Posterior cingulate gyrus (tissue), 11 donors: ENCODE measurements at regions of chr16 and their contacts with region 1.

Region 1: GRCh38 chr16:4240624-4241023 is 1.3 kb downstream of the SRL start:
- DNase-seq: no peak

Region 2: DNA sequence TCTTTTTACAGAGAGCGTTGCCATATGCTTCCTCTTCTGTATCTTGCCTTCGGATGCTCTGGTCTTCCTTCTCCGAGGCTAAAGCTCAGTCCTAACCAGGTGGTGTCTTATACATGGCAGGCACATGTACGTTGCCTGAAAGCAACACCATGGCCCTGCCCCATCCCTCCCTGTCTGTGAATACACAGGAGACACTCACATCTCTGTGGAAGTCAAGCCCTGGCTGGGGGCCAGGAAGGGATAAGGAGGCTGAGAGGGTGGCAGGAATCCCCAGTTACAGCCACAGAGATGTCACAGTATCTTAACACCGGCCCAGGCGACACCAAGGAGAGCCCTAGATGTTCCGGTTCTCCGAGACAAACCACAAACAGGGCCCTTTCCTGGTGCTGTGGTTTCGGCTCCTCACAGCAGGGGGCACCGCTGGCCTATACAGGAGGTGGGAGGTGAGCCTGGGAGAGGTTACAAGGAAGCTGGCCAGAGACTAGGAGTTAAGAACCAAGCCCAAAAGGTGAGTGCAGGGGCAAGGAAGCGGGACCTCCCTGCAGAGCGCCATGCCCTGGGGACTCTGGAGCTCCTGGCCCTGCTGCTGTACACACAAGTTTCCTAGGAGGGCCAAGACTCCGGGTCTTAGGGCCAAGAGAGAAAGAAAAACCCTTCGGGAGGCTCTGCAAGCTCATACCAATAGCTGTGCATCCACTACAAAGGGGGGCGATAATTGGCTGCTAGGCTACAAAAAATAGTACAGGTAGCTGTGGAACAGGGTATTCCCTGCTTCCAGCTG is 40.4 kb before region 1 on chr16:
- intact Hi-C with region 1: loop called (anchors 1 kb)
- DNase-seq: peak in 8 of 10 donors; percentile 18 to 91 (median 48)

Region 3: GRCh38 chr16:4307215-4308037 is 66.8 kb after region 1 on chr16:
- intact Hi-C with region 1: no loop called
- DNase-seq: peak; percentile 56 to 97 (median 77)